Naive thymus-derived CD4-positive, alpha-beta T cell (primary cell): ENCODE measurements at regions of chr1 and their contacts with region 1.

Region 1: GRCh38 chr1:58783993-58784757 is at the start of gene JUN:
- DNase-seq: peak; percentile 94 to 100 (median 98)
- ATAC-seq: peak; percentile 82
- H3K4me3 ChIP-seq: peak within 1 kb of the TSS; percentile 97
- H3K4me3 Mint-ChIP-seq: peak within 1 kb of the TSS; percentile 91 to 100 (median 95)
- H3K27ac ChIP-seq: peak within 1 kb of the TSS; percentile 95
- H3K27ac Mint-ChIP-seq: peak within 1 kb of the TSS; percentile 98 to 100 (median 100)
- H3K4me1 ChIP-seq: peaks cover 13 to 16% of the 10 kb centered on the region in 2 donors
- H3K4me1 Mint-ChIP-seq: peaks cover 7 to 49% (median 33%) of the 10 kb centered on the region in 7 donors
- H3K27me3 ChIP-seq: peaks cover 0 to 4% of the 10 kb centered on the region in 2 donors
- H3K27me3 Mint-ChIP-seq: peaks cover 0 to 5% (median 3%) of the 10 kb centered on the region in 5 donors
- total RNA-seq, gene JUN: 17.9 to 1,362 (median 41.2) TPM

Region 2: GRCh38 chr1:57770772-57771171 is 1013.4 kb before region 1 on chr1:
- CTCF ChIA-PET with region 1: no interaction called
- POLR2A ChIA-PET with region 1: no interaction called
- intact Hi-C with region 1: no loop called
- DNase-seq: no peak
- ATAC-seq: no peak
- H3K4me3 ChIP-seq: no peak overlapping the region
- H3K4me3 Mint-ChIP-seq: no peak overlapping the region
- H3K27ac ChIP-seq: no peak overlapping the region
- H3K27ac Mint-ChIP-seq: no peak overlapping the region
- H3K4me1 ChIP-seq: no peaks in the 10 kb centered on the region
- H3K4me1 Mint-ChIP-seq: no peaks in the 10 kb centered on the region
- H3K27me3 ChIP-seq: no peaks in the 10 kb centered on the region
- H3K27me3 Mint-ChIP-seq: peaks cover 0 to 18% (median 9%) of the 10 kb centered on the region in 5 donors

Region 3: GRCh38 chr1:58679463-58679862 is 104.7 kb before region 1 on chr1:
- CTCF ChIA-PET with region 1: no interaction called
- POLR2A ChIA-PET with region 1: no interaction called
- intact Hi-C with region 1: no loop called
- DNase-seq: no peak
- ATAC-seq: no peak
- H3K4me3 ChIP-seq: no peak overlapping the region
- H3K4me3 Mint-ChIP-seq: no peak overlapping the region
- H3K27ac ChIP-seq: no peak overlapping the region
- H3K27ac Mint-ChIP-seq: peak overlapping the region in 4 of 9 donors; percentile 16 to 62 (median 38)
- H3K4me1 ChIP-seq: no peaks in the 10 kb centered on the region
- H3K4me1 Mint-ChIP-seq: peaks cover 9 to 35% (median 28%) of the 10 kb centered on the region in 7 donors
- H3K27me3 ChIP-seq: no peaks in the 10 kb centered on the region
- H3K27me3 Mint-ChIP-seq: no peaks in the 10 kb centered on the region

Region 4: GRCh38 chr1:58739856-58740466 is 44.2 kb before region 1 on chr1:
- CTCF ChIA-PET with region 1: no interaction called
- POLR2A ChIA-PET with region 1: no interaction called
- intact Hi-C with region 1: loop called (anchors 1 to 2 kb)
- DNase-seq: peak in 7 of 9 donors; percentile 36 to 68 (median 62)
- ATAC-seq: peak; percentile 70
- H3K4me3 ChIP-seq: no peak overlapping the region
- H3K4me3 Mint-ChIP-seq: no peak overlapping the region
- H3K27ac ChIP-seq: no peak overlapping the region
- H3K27ac Mint-ChIP-seq: no peak overlapping the region
- H3K4me1 ChIP-seq: no peaks in the 10 kb centered on the region
- H3K4me1 Mint-ChIP-seq: peaks cover 0 to 14% (median 0%) of the 10 kb centered on the region in 7 donors
- H3K27me3 ChIP-seq: no peaks in the 10 kb centered on the region
- H3K27me3 Mint-ChIP-seq: peaks cover 0 to 5% (median 3%) of the 10 kb centered on the region in 5 donors

Region 5: DNA sequence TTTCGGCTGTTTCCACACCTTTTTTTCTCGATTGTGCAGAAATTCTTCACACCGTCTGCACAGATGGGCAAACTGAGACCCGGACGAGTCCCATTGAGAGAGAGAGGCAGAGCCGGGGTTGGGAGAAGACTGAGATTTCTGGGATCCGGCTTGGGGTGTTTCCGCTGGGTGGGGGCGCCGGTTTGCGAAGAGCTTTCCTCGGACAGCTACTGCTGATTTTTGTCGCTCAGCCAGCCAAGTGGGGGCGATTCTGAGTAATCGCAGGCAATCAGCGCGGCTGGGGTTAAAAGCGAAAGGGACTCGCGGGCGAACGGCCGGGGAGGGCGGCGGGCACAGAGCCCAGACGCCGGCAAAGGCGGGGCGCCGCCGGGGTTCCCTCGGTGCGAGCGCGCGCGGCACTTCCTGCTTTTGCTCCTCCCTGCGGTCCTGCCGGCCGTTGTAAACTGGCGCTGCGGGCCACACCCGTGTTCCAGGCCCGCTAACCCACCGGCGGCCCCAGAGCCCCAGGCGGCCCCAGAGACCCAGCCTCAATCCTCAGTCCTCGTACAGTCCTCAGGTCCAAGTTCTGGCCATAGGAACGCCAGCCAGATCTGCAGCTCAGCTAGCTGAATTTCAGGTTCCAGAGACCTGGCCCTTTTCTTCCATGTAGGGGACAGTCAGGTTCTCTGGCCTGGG is 32.0 kb after region 1 on chr1:
- CTCF ChIA-PET with region 1: no interaction called
- POLR2A ChIA-PET with region 1: interaction called, 13 read pairs
- intact Hi-C with region 1: loop called (anchors 1 kb)
- DNase-seq: peak; percentile 66 to 84 (median 71)
- ATAC-seq: peak; percentile 88
- H3K4me3 ChIP-seq: peak overlapping the region; percentile 89
- H3K4me3 Mint-ChIP-seq: peak overlapping the region; percentile 88 to 94 (median 92)
- H3K27ac ChIP-seq: peak overlapping the region; percentile 77
- H3K27ac Mint-ChIP-seq: peak overlapping the region; percentile 77 to 95 (median 90)
- H3K4me1 ChIP-seq: peaks cover 27 to 34% of the 10 kb centered on the region in 2 donors
- H3K4me1 Mint-ChIP-seq: peaks cover 19 to 49% (median 41%) of the 10 kb centered on the region in 7 donors
- H3K27me3 ChIP-seq: no peaks in the 10 kb centered on the region
- H3K27me3 Mint-ChIP-seq: peaks cover 0 to 5% (median 0%) of the 10 kb centered on the region in 5 donors

Region 6: GRCh38 chr1:58903514-58904298 is 119.5 kb after region 1 on chr1:
- CTCF ChIA-PET with region 1: no interaction called
- POLR2A ChIA-PET with region 1: interaction called, 3 read pairs
- intact Hi-C with region 1: loop called (anchors 1 kb)
- DNase-seq: peak; percentile 30 to 88 (median 49)
- ATAC-seq: peak; percentile 91
- H3K4me3 ChIP-seq: peak overlapping the region; percentile 60
- H3K4me3 Mint-ChIP-seq: peak overlapping the region; percentile 74 to 86 (median 80)
- H3K27ac ChIP-seq: peak overlapping the region; percentile 63
- H3K27ac Mint-ChIP-seq: peak overlapping the region in 8 of 9 donors; percentile 33 to 91 (median 74)
- H3K4me1 ChIP-seq: peaks cover 4% of the 10 kb centered on the region in 2 donors
- H3K4me1 Mint-ChIP-seq: peaks cover 5 to 38% (median 16%) of the 10 kb centered on the region in 7 donors
- H3K27me3 ChIP-seq: no peaks in the 10 kb centered on the region
- H3K27me3 Mint-ChIP-seq: no peaks in the 10 kb centered on the region

Region 7: GRCh38 chr1:59020151-59020997 is 236.2 kb after region 1 on chr1:
- CTCF ChIA-PET with region 1: interaction called, 3 read pairs
- POLR2A ChIA-PET with region 1: interaction called, 6 read pairs
- intact Hi-C with region 1: loop called (anchors 1 to 2 kb)
- DNase-seq: peak; percentile 7 to 58 (median 43)
- ATAC-seq: peak; percentile 88
- H3K4me3 ChIP-seq: peak overlapping the region; percentile 38
- H3K4me3 Mint-ChIP-seq: peak overlapping the region; percentile 80 to 90 (median 84)
- H3K27ac ChIP-seq: peak overlapping the region; percentile 57
- H3K27ac Mint-ChIP-seq: peak overlapping the region; percentile 88 to 99 (median 94)
- H3K4me1 ChIP-seq: peaks cover 11 to 15% of the 10 kb centered on the region in 2 donors
- H3K4me1 Mint-ChIP-seq: peaks cover 16 to 56% (median 25%) of the 10 kb centered on the region in 7 donors
- H3K27me3 ChIP-seq: no peaks in the 10 kb centered on the region
- H3K27me3 Mint-ChIP-seq: no peaks in the 10 kb centered on the region

Region 8: DNA sequence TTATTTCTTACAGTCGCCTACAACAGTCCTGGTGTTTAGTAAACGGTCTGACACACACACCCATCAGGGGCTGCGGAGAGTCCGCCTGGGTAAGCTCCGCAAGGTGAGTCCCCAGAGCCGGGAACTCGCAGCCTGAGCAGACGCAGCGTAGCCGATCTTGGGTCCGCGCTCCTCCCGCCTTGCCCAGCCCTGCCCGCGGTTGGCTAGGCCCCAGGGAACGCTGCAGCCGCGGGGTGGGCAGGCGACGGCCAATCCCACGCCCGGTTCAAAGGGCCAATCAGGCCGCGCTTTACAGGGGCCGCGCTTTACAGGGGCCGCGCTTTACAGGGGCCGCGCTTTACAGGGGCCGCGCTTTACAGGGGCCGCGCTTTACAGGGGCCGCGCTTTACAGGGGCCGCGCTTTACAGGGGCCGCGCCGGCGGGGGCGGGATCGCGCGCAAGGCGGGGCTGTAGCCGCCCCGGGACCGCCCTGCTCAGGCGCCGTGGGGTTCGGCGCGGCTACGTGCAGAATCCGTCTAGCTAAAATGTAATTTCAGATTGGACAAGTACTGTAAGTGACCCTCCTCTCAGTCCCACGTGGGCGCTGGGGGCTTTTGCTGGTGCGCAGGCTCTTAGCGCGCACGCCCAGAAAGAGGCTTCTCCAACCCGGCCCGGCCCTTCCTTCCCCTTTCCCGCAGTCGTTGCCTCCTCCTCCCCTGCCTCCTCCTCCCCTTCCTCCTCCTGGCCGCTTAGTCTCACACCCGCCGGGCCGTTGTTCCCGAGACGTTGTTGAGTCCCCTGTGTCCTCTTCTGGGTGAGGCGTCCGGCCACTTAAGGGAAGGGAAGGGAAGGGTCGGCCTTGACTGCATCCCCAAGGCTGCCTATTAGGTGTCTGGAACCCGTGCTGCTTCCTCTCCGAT is 512.4 kb after region 1 on chr1 and contains the start of gene FGGY:
- CTCF ChIA-PET with region 1: no interaction called
- POLR2A ChIA-PET with region 1: interaction called, 10 read pairs
- intact Hi-C with region 1: loop called (anchors 1 kb)
- DNase-seq: peak; percentile 71 to 85 (median 81)
- ATAC-seq: peak; percentile 93
- H3K4me3 ChIP-seq: peak within 1 kb of the TSS; percentile 73
- H3K4me3 Mint-ChIP-seq: peak within 1 kb of the TSS; percentile 77 to 95 (median 92)
- H3K27ac ChIP-seq: peak within 1 kb of the TSS; percentile 85
- H3K27ac Mint-ChIP-seq: peak within 1 kb of the TSS; percentile 83 to 96 (median 92)
- H3K4me1 ChIP-seq: peaks cover 7 to 11% of the 10 kb centered on the region in 2 donors
- H3K4me1 Mint-ChIP-seq: peaks cover 9 to 51% (median 27%) of the 10 kb centered on the region in 7 donors
- H3K27me3 ChIP-seq: no peaks in the 10 kb centered on the region
- H3K27me3 Mint-ChIP-seq: no peaks in the 10 kb centered on the region
- total RNA-seq, gene FGGY: 10.7 to 15.2 (median 13.9) TPM